ENCODE measurements at regions of chr7 and their contacts with region 1.

Region 1: DNA sequence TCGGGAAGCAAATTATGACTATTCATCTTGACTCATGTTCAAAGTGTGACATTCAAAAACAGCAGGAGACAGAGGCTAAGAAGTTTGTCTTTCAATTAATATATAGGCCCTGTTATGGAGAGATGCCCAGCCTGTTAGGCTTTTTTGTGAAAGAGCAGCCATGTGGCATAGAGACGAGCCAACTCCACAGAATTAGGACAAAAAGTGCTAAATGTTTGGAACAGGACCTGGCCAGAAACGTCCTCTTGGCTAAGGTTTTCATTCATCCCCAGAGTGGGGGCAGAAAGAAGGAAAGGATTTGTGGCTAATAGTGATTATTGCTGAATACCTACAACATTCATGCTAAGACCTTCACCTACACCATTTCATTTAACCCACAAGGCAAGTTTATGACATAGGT is 324.7 kb upstream of the NPVF start:
- DNase-seq: no peak
- ATAC-seq: peak in 1 of 8 donors; percentile 31
- H3K4me3 ChIP-seq: no peak overlapping the region
- H3K27ac ChIP-seq: no peak overlapping the region
- H3K4me1 ChIP-seq: peaks cover 0 to 9% (median 0%) of the 10 kb centered on the region in 9 donors
- H3K27me3 ChIP-seq: peaks cover 0 to 9% (median 4%) of the 10 kb centered on the region in 7 donors
- CTCF ChIP-seq: no peak

Region 2: GRCh38 chr7:25402532-25402931 is 150.5 kb before region 1 on chr7:
- intact Hi-C with region 1: loop called in 1 of 10 experiments (anchors 5 kb)
- DNase-seq: no peak
- ATAC-seq: no peak
- H3K4me3 ChIP-seq: no peak overlapping the region
- H3K27ac ChIP-seq: no peak overlapping the region
- H3K4me1 ChIP-seq: no peaks in the 10 kb centered on the region
- H3K27me3 ChIP-seq: peaks cover 0 to 3% (median 0%) of the 10 kb centered on the region in 7 donors
- CTCF ChIP-seq: no peak

Measured in heart right ventricle (tissue), 16 donors.